Activated CD4-positive, alpha-beta T cell treated with anti-CD3 and anti-CD28 coated beads for 36 hours (primary cell): ENCODE measurements at regions of chr17 and their contacts with region 1.

Region 1: GRCh38 chr17:75749545-75750389 is 15.2 kb downstream of the GALK1 start:
- DNase-seq: peak; percentile 95
- ATAC-seq: peak; percentile 75
- H3K4me3 Mint-ChIP-seq: no peak overlapping the region
- H3K27ac Mint-ChIP-seq: no peak overlapping the region
- H3K4me1 Mint-ChIP-seq: peaks cover 18% of the 10 kb centered on the region
- H3K27me3 Mint-ChIP-seq: no peaks in the 10 kb centered on the region

Region 2: GRCh38 chr17:75601057-75602051 is 148.4 kb before region 1 on chr17:
- CTCF ChIA-PET with region 1: interaction called, 33 read pairs
- POLR2A ChIA-PET with region 1: no interaction called
- intact Hi-C with region 1: loop called in 1 of 2 experiments (anchors 1 kb)
- DNase-seq: peak; percentile 83
- ATAC-seq: peak; percentile 90
- H3K4me3 Mint-ChIP-seq: no peak overlapping the region
- H3K27ac Mint-ChIP-seq: no peak overlapping the region
- H3K4me1 Mint-ChIP-seq: no peaks in the 10 kb centered on the region
- H3K27me3 Mint-ChIP-seq: no peaks in the 10 kb centered on the region

Region 3: GRCh38 chr17:75652915-75653549 is 96.7 kb before region 1 on chr17:
- CTCF ChIA-PET with region 1: interaction called, 10 read pairs
- POLR2A ChIA-PET with region 1: no interaction called
- intact Hi-C with region 1: no loop called
- DNase-seq: peak; percentile 42
- ATAC-seq: peak; percentile 75
- H3K4me3 Mint-ChIP-seq: no peak overlapping the region
- H3K27ac Mint-ChIP-seq: no peak overlapping the region
- H3K4me1 Mint-ChIP-seq: no peaks in the 10 kb centered on the region
- H3K27me3 Mint-ChIP-seq: no peaks in the 10 kb centered on the region

Region 4: GRCh38 chr17:75688209-75688825 is 61.5 kb before region 1 on chr17:
- CTCF ChIA-PET with region 1: interaction called, 54 read pairs
- POLR2A ChIA-PET with region 1: interaction called, 12 read pairs
- intact Hi-C with region 1: no loop called
- DNase-seq: peak; percentile 44
- ATAC-seq: peak; percentile 23
- H3K4me3 Mint-ChIP-seq: no peak overlapping the region
- H3K27ac Mint-ChIP-seq: peak overlapping the region; percentile 90
- H3K4me1 Mint-ChIP-seq: peaks cover 74% of the 10 kb centered on the region
- H3K27me3 Mint-ChIP-seq: no peaks in the 10 kb centered on the region

Region 5: GRCh38 chr17:75738218-75738802 is 11.5 kb before region 1 on chr17:
- CTCF ChIA-PET with region 1: interaction called, 27 read pairs
- POLR2A ChIA-PET with region 1: no interaction called
- intact Hi-C with region 1: no loop called
- DNase-seq: peak; percentile 61
- ATAC-seq: peak; percentile 91
- H3K4me3 Mint-ChIP-seq: no peak overlapping the region
- H3K27ac Mint-ChIP-seq: peak overlapping the region; percentile 55
- H3K4me1 Mint-ChIP-seq: peaks cover 6% of the 10 kb centered on the region
- H3K27me3 Mint-ChIP-seq: no peaks in the 10 kb centered on the region

Region 6: DNA sequence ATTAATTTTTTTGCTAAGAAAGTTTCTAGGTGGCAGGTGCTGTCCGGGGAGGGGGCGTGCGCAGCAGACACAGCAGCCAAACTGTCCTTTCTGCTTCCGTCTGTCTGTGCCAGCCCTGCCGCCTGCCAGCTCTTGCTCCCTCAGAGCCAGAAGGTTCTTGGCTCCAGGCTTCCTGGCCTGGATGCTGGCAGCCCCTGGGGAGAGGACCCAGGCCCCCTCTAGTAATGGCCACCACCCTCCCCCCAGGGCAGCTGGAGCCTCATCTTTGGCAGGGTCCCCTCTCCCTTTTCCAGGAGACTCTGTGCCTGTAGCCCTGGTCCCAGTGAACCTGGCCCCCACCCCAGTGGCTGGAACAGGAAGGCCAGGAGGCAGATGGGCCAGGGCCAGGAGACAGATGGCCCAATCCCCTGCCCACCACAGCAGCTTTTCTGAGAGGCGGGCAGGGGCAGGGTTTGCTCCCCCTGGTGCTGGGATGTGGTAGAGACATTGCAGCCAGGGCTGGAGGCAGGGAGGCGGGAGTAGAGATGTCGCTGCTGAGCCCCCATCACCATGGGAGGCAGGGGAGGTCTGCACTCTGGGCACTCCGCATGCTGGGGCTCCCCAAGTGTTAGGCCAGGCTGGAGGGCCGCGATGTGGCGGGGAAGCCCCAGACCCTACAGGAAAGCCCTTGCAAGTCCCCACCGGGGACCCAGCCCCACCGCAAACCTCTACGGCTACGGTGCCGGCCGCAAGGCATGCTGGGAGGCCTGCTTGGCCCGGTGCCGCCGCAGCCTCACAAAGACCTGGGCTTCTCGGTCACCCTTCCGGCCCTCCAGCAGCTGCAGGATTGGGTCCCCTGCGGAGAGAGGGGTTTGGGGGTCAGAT is 77.7 kb after region 1 on chr17:
- CTCF ChIA-PET with region 1: interaction called, 18 read pairs
- POLR2A ChIA-PET with region 1: no interaction called
- intact Hi-C with region 1: loop called in 1 of 2 experiments (anchors 1 kb)
- DNase-seq: peak; percentile 85
- ATAC-seq: peak; percentile 75
- H3K4me3 Mint-ChIP-seq: peak overlapping the region; percentile 53
- H3K27ac Mint-ChIP-seq: peak overlapping the region; percentile 87
- H3K4me1 Mint-ChIP-seq: peaks cover 14% of the 10 kb centered on the region
- H3K27me3 Mint-ChIP-seq: no peaks in the 10 kb centered on the region